Pancreas (tissue), 10 donors: ENCODE measurements at regions of chr16 and their contacts with region 1.

Region 1: DNA sequence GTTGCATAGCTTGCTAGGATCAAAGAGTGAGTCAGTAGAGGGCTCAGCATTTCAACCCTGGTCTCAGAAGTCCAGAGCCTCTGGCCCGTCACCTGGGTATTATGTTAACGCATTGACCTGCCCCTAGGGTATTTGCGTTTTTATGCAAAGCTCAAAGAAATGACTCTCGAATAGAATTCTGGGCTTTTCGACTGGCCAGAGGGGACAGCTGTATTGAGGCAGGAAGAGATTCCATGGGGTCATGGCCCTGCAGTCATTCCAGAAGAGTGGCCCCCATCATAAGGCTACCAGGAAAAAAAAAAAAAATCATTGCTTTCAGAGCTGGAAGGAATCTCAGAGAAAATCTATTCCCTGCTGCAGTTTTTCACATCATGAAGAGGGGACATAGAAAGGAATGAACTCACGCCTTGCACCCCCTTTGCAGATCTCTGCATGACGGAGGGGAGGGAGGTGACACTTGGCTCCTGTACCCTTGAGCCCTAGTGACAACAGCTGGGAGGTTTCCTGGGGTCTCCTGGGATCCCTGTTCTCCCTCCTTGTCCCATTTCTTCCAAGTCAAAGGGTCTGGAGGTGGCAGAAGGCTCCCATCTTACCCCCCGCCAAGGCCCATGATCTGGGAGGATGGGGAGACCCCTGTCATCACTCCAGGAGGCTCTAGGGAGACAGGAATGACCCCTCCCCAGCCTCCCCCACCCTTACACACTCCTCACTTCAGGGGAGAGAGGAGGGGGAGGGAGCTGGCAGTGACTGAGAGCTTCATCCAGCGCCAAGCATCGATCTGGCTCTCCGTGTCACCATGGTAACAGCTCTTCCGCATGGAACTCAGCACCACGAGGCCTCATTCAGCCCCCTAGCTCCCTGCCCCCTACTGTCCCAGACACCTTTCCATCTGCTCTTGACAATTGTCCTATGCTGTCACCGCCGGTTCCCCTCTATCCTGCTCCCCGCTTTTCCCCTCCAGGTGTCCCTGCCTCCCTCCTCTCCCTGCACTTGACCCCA is 35.8 kb downstream of the GP2 start:
- DNase-seq: no peak
- ATAC-seq: peak in 1 of 4 donors; percentile 17
- H3K4me3 ChIP-seq: no peak overlapping the region
- H3K27ac ChIP-seq: no peak overlapping the region
- H3K4me1 ChIP-seq: no peaks in the 10 kb centered on the region
- H3K27me3 ChIP-seq: no peaks in the 10 kb centered on the region
- CTCF ChIP-seq: no peak

Region 2: DNA sequence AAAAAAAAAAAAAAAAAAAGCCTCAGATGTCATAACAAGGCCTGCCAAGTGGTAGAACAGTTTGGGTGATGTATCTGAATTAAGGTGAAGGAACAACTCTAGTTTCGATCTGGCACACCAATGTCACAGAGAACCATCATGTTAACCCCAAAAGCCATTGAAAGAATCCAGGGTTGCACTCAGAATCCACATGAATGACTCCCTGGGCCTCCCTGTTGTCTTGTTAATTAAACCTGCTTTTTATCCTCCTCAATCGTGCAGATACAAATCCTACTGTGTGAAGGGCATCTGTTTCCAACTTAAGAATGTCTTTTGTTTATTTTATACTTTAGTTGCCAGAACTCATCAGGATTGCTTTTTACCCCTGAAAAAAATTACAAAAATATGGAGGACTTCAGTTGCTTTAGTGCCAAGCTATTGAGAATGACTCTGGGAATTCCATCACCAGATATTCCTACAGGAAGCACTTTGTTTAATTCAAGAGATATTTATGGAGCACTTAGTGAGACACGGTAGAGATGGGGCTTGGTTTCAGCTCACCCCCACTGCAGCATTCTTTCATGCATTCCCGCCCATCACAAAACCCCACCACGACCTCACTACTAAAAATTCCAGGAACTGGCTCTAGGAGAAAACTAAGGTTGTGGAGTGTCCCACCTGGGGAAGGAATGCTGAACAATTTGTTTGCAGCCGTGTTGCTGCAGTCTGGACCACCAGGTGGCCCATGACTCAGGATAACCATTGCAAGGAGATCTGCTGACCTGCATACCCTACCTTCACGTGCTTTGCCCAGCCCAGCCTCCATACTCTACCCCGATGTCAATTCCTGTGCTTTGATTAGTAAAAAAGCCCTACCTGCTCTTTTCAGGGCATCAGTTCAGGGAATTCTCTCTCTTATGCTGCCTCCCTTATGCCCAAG is 343.1 kb before region 1 on chr16:
- intact Hi-C with region 1: no loop called
- DNase-seq: no peak
- ATAC-seq: no peak
- H3K4me3 ChIP-seq: no peak overlapping the region
- H3K27ac ChIP-seq: no peak overlapping the region
- H3K4me1 ChIP-seq: no peaks in the 10 kb centered on the region
- H3K27me3 ChIP-seq: no peaks in the 10 kb centered on the region
- CTCF ChIP-seq: no peak

Region 3: DNA sequence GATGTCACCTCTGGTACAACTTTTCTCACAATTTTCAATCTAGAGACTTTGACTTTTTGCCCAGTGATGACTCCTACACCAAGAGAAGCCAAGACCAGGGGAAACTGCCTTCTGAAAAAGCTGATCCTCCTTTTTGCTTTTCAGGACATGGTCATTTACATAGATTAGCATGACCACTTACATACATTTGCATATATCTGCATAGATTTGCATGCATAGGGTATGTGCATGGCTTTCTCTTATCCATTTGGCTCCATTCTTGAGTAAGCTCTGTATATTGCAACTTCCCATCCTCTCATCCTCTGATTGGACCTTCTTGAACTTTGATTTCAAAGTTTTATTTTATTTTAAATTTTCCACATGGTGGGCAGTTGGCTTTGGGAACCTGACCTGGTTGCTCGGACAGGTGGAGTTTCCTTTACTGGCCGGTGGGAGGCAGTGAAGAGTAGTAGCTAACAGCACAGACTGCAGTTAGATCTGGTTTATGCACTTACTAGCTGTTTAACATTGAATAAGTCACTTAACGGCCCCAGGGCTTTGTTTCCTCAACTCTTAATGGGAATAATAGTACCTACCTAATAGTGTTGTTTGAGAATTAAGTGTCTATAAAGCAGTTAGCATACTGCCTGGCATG is 310.8 kb before region 1 on chr16:
- intact Hi-C with region 1: loop called in 1 of 3 experiments (anchors 10 kb)
- DNase-seq: peak in 1 of 6 donors; percentile 14
- ATAC-seq: peak in 2 of 4 donors; percentile 52 to 72
- H3K4me3 ChIP-seq: no peak overlapping the region
- H3K27ac ChIP-seq: no peak overlapping the region
- H3K4me1 ChIP-seq: no peaks in the 10 kb centered on the region
- H3K27me3 ChIP-seq: no peaks in the 10 kb centered on the region
- CTCF ChIP-seq: peak; percentile 13 to 34 (median 29)